Heart left ventricle (tissue), 16 donors: ENCODE measurements at regions of chr15 and their contacts with region 1.

Region 1: GRCh38 chr15:82910721-82911120 is 41.8 kb downstream of the HOMER2 start:
- DNase-seq: no peak
- ATAC-seq: no peak
- H3K4me3 ChIP-seq: no peak overlapping the region
- H3K27ac ChIP-seq: no peak overlapping the region
- H3K4me1 ChIP-seq: peaks cover 0 to 6% (median 0%) of the 10 kb centered on the region in 12 donors
- H3K27me3 ChIP-seq: no peaks in the 10 kb centered on the region
- CTCF ChIP-seq: no peak
- POLR2A ChIP-seq: no peak

Region 2: DNA sequence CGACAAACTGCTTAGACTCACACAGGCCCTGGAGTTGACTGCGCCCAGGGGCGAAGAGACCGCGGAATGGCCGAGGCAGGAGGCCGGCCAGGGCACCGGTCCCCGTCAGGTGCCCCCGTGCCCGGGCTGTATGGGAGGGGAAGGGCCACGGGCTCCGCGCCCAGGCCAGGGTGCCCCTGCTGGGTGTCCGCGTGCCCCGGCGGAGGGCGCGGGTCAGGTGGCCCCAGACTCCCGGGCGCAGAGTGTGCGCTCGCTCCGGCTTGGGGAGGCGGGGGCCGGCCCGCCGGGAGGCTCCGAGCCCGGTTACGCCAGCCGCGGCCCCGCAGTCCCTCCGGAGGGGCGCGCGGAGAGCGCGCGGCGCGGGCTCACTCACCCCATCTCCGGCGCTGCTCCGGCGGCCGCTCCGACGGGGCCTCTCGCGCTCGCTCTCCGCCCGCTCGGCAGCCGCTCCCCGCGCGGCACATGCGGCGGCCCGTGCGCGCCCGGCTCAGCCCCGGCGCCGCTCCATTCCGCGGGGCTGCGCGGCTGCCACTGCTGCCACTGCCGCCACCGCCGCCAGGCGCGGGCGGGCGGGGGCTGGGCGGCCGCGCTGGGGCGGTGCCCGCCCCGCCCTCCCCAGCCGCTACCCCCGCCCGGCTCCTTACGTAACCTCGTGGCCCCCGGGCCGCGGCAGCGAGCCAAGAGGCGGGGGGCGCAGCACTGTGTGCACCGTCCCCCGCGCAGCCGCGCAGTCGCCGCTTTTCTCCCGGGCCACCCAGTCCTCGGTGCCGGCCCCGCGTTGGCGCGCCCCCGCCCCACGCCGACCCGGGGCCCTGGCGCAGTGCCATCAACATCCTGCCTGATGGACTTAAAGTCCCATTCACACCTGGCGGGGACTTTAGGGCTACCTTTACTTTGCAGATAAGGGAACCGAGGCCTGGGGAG is 41.7 kb after region 1 on chr15 and contains the start of gene HOMER2:
- intact Hi-C with region 1: loop called in 1 of 10 experiments (anchors 5 kb)
- DNase-seq: peak in 4 of 5 donors; percentile 18 to 56 (median 34)
- ATAC-seq: peak in 3 of 4 donors; percentile 71 to 80 (median 78)
- H3K4me3 ChIP-seq: peak within 1 kb of the TSS in 11 of 12 donors; percentile 50 to 81 (median 60)
- H3K27ac ChIP-seq: peak within 1 kb of the TSS in 11 of 12 donors; percentile 37 to 87 (median 66)
- H3K4me1 ChIP-seq: peaks cover 0 to 18% (median 3%) of the 10 kb centered on the region in 12 donors
- H3K27me3 ChIP-seq: peaks cover 0 to 14% (median 0%) of the 10 kb centered on the region in 9 donors
- CTCF ChIP-seq: peak in 1 of 12 donors; percentile 10
- POLR2A ChIP-seq: no peak
- total RNA-seq, gene HOMER2: 30.4 to 60.5 (median 38.2) TPM